A549 (cell line): ENCODE measurements at regions of chr1 and their contacts with region 1.

Region 1: DNA sequence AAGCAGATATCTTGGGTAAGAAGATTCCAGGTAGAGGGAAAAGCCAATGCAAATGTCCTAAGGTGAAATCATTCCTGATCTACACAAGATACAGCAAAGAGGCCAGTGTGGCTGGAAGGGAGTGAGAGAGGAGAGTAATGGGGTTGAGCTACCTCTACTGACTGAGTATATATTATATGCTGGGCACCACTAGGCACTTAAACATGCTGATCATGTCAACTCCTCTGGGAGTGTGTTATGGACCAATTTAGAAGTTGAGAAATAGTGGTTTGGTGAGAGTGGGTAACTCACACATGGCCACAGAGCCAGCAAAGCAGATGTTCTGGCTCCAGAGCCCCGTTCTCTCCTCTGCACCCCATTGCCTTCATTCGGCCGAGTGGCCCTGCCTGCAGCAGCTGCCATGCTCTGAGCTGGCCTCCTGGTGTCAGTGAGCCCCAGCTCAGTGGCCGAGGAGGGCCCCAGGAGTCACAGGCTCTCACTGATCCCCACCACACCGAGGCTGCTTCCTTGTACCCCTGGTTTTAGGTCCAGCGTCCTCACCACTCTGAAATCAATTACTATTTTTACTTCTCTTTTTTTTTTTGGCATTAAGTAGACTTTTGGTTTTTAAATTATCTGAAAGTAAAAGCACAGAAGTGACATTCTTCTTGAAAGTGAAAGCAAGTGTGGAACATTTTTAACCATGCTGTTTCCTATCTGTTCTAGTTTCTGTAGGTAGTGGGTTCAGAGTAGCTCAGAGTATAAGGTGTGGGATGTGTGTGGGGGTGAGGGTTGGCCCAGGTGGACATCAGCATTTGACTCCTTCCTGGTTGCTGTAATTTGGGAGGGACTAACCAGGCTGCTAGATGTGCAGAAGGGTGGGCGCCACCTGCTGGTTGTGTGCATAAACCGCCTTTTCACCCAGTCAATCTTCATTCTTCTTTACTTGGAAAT is 45.8 kb upstream of the CRNN start:
- DNase-seq: peak; percentile 39 to 83
- ATAC-seq: peak; percentile 61 to 86; a peak in 4 of 6 replicates
- H3K4me3 ChIP-seq: no peak overlapping the region
- H3K27ac ChIP-seq: peak overlapping the region in 1 of 2 experiments; percentile 15; a peak in 1 of 6 replicates
- H3K4me1 ChIP-seq: no peaks in the 10 kb centered on the region
- CTCF ChIP-seq: peak; percentile 69
- EP300 ChIP-seq: no peak
- POLR2A ChIP-seq: no peak
- RAD21 ChIP-seq: no peak; a peak in 1 of 5 replicates

Region 2: DNA sequence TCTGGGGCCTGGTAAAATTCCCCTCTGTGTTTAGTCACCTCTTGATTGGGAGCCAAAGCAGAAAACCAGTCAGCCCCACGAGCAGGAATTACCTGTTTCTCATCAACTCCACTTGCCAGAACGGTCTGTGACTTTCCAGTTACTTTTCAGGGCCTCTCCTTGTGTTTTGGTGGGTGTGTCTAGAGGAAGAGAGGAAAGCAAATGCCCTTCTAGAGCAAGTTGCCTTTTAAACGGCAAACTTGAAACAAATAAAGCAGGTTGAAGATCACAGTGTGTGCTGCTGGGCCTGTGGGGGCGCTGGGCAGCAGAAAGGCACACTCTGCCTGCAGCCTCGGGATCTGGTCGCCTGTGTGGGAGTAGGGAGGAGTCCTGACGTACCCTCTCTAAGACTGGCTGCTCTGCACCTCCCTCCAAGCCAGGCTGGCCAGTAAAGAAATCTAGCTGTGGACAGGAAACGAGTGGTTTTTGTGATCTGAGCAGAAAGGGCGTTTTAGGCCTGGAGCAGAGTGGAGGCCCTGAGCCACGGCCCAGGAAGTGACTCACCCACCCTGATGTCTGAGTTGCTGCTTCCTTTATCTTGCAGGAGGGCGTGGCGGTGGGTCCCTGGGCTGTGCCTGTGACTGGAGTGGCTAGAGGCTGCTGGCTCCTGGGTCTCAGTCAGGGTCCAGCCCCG is 412.0 kb before region 1 on chr1:
- CTCF ChIA-PET with region 1: interaction called, 44 read pairs
- POLR2A ChIA-PET with region 1: no interaction called
- DNase-seq: peak; percentile 83 to 100
- ATAC-seq: peak; percentile 95
- H3K4me3 ChIP-seq: peak overlapping the region; percentile 43
- H3K27ac ChIP-seq: peak overlapping the region; percentile 95 to 96
- H3K4me1 ChIP-seq: peaks cover 45% of the 10 kb centered on the region
- CTCF ChIP-seq: peak; percentile 57; the same call in 2 of the 3 replicates
- EP300 ChIP-seq: no peak; a peak in 1 of 5 replicates
- POLR2A ChIP-seq: peak; percentile 66
- RAD21 ChIP-seq: peak; percentile 32 to 45; a peak in 4 of 5 replicates

Region 3: GRCh38 chr1:152148981-152149380 is 310.9 kb before region 1 on chr1:
- CTCF ChIA-PET with region 1: interaction called, 30 read pairs
- POLR2A ChIA-PET with region 1: no interaction called
- DNase-seq: no peak
- ATAC-seq: no peak
- H3K4me3 ChIP-seq: no peak overlapping the region
- H3K27ac ChIP-seq: no peak overlapping the region
- H3K4me1 ChIP-seq: no peaks in the 10 kb centered on the region
- CTCF ChIP-seq: no peak
- EP300 ChIP-seq: no peak
- POLR2A ChIP-seq: no peak
- RAD21 ChIP-seq: no peak

Region 4: GRCh38 chr1:152398812-152399698 is 60.8 kb before region 1 on chr1:
- CTCF ChIA-PET with region 1: interaction called, 55 read pairs
- POLR2A ChIA-PET with region 1: no interaction called
- DNase-seq: peak; percentile 44 to 66
- ATAC-seq: peak; percentile 98 to 99
- H3K4me3 ChIP-seq: no peak overlapping the region
- H3K27ac ChIP-seq: no peak overlapping the region
- H3K4me1 ChIP-seq: no peaks in the 10 kb centered on the region; the same call in 2 of the 3 replicates
- CTCF ChIP-seq: peak; percentile 61
- EP300 ChIP-seq: no peak
- POLR2A ChIP-seq: no peak
- RAD21 ChIP-seq: peak; percentile 52 to 63; a peak in 4 of 5 replicates

Region 5: GRCh38 chr1:152440635-152441471 is 19.0 kb before region 1 on chr1:
- CTCF ChIA-PET with region 1: interaction called, 66 read pairs
- POLR2A ChIA-PET with region 1: no interaction called
- DNase-seq: peak; percentile 77 to 89
- ATAC-seq: peak; percentile 97 to 99
- H3K4me3 ChIP-seq: no peak overlapping the region
- H3K27ac ChIP-seq: no peak overlapping the region
- H3K4me1 ChIP-seq: no peaks in the 10 kb centered on the region
- CTCF ChIP-seq: peak; percentile 85
- EP300 ChIP-seq: no peak
- POLR2A ChIP-seq: no peak
- RAD21 ChIP-seq: peak; percentile 80

Region 6: DNA sequence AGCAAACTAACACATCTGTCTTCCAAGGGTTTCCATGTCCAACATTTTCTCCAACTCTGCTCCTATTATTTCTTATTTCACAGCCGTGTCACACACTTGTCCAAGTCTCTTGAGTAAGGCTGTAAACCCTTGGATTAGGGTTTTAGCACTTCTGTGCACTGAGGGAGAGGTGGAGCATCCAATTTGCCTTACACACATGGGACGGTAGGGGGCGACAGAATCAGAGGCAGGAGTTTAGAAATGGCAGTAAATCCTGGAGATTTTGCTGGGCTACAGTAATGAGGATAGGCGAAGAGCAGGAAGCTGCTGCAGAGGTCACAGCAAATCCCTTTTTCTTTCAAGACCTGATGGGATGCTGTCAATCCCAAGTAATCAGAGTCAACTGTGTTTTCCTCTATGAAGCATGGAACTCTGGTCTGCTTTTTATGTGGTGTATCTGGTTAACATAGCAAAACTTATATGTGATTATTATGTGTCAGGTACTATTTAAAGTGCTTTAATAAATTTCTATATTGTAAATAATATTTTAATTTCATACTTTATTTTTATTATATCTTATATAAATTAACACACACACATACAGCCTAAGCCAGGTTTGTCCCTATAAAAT is 35.3 kb after region 1 on chr1:
- CTCF ChIA-PET with region 1: interaction called, 22 read pairs
- POLR2A ChIA-PET with region 1: no interaction called
- DNase-seq: peak in 1 of 2 experiments; percentile 30
- ATAC-seq: no peak
- H3K4me3 ChIP-seq: no peak overlapping the region
- H3K27ac ChIP-seq: no peak overlapping the region
- H3K4me1 ChIP-seq: peaks cover 16% of the 10 kb centered on the region
- CTCF ChIP-seq: no peak
- EP300 ChIP-seq: no peak
- POLR2A ChIP-seq: no peak
- RAD21 ChIP-seq: 0 out of 5 replicates have a peak, but pooled peaks of 1 of the 2 experiments have one; percentile 11

Region 7: DNA sequence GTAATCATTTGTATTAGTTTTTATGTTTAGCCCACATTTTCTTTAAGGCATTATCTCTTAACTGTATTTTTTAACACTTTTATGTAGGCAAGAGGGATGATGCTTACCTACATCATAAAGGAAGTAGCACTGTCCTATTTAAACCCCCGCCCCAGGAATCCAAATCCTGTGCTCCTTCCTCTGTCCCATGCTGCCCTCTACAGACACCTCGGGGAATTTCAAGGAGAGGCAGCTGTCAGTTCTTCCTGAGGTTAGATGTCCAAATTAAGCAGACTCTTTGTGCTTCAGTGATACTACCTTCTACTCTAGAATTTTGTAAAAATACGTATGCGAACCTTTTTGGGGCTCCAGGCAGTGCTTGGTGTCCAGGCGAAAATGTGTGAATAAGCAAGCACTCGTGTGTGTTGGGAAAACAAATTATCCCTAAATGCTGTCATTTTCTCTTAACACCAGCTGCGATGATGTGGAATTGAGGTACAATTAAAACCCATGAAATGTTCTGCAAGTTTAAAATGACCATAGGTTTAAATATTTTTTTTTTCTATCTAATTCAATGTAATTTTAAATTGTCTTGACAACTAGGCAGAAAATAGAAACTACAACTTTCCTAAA is 73.6 kb after region 1 on chr1:
- CTCF ChIA-PET with region 1: interaction called, 25 read pairs
- POLR2A ChIA-PET with region 1: no interaction called
- DNase-seq: peak; percentile 33 to 76
- ATAC-seq: peak; percentile 81 to 92; a peak in 5 of 6 replicates
- H3K4me3 ChIP-seq: no peak overlapping the region
- H3K27ac ChIP-seq: no peak overlapping the region
- H3K4me1 ChIP-seq: no peaks in the 10 kb centered on the region
- CTCF ChIP-seq: peak; percentile 93
- EP300 ChIP-seq: no peak
- POLR2A ChIP-seq: no peak
- RAD21 ChIP-seq: peak; percentile 93 to 96